PC-3 (cell line): ENCODE measurements at regions of chr4 and their contacts with region 1.

Region 1: GRCh38 chr4:71980976-71981375 is 50.8 kb upstream of the NPFFR2 start:
- DNase-seq: no peak
- ATAC-seq: no peak
- H3K4me3 ChIP-seq: no peak overlapping the region
- H3K27ac ChIP-seq: no peak overlapping the region
- H3K4me1 ChIP-seq: no peaks in the 10 kb centered on the region
- H3K27me3 ChIP-seq: no peaks in the 10 kb centered on the region
- CTCF ChIP-seq: no peak

Region 2: DNA sequence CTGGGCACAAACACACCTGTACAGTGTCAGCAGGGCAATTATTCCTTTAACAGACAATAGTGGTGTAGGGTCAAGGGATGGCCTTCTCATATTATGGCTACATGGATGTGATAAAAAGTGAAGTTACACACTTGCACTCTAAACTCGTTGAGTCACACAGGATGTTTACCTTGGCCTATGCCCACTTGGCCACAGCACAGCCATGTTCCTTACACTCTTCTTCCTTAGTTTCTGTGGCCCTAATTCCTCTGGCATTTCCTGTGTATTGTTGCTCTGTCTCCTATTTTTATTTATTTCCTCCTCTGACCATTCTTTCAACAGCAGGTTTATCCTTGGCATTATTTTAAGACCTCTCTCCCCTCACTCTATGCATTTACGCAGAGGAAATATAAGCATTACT is 36.0 kb before region 1 on chr4:
- CTCF ChIA-PET with region 1: no interaction called
- POLR2A ChIA-PET with region 1: no interaction called
- intact Hi-C with region 1: no loop called
- DNase-seq: peak; percentile 65
- ATAC-seq: peak; percentile 57
- H3K4me3 ChIP-seq: no peak overlapping the region
- H3K27ac ChIP-seq: no peak overlapping the region
- H3K4me1 ChIP-seq: 0 out of 2 replicates have a peak, but pooled peaks cover 5% of the 10 kb centered on the region
- H3K27me3 ChIP-seq: no peaks in the 10 kb centered on the region
- CTCF ChIP-seq: no peak

Region 3: GRCh38 chr4:72186714-72187113 is 205.7 kb after region 1 on chr4:
- CTCF ChIA-PET with region 1: no interaction called
- POLR2A ChIA-PET with region 1: no interaction called
- intact Hi-C with region 1: loop called (anchors 10 kb)
- DNase-seq: no peak
- ATAC-seq: no peak
- H3K4me3 ChIP-seq: no peak overlapping the region
- H3K27ac ChIP-seq: no peak overlapping the region
- H3K4me1 ChIP-seq: no peaks in the 10 kb centered on the region
- H3K27me3 ChIP-seq: no peaks in the 10 kb centered on the region
- CTCF ChIP-seq: no peak